HEK293T (cell line): ENCODE measurements at regions of chr17 and their contacts with region 1.

Region 1: GRCh38 chr17:37650419-37651003 is 7.3 kb upstream of the DDX52 start:
- DNase-seq: peak; percentile 22

Region 2: DNA sequence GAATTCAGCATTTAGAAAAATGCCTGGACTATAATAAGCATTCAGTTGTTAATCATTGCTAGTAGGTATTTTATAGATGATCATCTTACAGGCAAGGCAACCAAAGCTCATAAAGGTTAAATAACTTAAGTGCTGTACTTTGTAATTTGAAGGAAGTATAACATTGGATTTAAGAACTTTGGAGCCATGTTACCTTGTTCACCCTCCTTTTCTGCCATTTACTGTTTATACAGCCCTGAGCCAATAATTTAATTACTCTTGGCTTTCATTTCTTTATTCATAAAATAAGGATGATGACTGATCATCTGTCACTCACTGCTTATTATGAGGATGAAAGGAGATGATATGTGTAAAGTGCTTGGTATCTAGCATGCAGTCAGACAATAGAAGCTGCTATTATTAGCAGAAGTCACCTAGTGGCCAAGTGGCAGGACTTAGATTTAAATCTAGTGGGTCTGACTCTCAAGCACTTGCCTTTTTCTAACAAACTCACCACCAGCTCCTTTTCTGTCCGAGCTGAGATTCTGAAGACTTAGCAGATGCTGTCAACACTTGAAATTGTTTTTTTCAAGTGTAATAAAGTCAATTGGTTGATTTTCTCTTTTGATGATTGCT is 11.0 kb after region 1 on chr17:
- CTCF ChIA-PET with region 1: interaction called, 11 read pairs
- POLR2A ChIA-PET with region 1: no interaction called
- DNase-seq: no peak

Region 3: GRCh38 chr17:37694734-37695133 is 44.2 kb after region 1 on chr17:
- CTCF ChIA-PET with region 1: no interaction called
- POLR2A ChIA-PET with region 1: no interaction called
- DNase-seq: no peak

Region 4: GRCh38 chr17:37708616-37709212 is 58.2 kb after region 1 on chr17:
- CTCF ChIA-PET with region 1: no interaction called
- POLR2A ChIA-PET with region 1: no interaction called
- DNase-seq: no peak

Region 5: GRCh38 chr17:37820313-37820994 is 169.9 kb after region 1 on chr17:
- CTCF ChIA-PET with region 1: interaction called, 11 read pairs
- POLR2A ChIA-PET with region 1: no interaction called
- DNase-seq: no peak